ENCODE measurements at regions of chr4 and their contacts with region 1.

Region 1: GRCh38 chr4:36244257-36245079 is at the start of gene ARAP2:
- DNase-seq: peak; percentile 78
- ATAC-seq: peak; percentile 83
- H3K4me3 Mint-ChIP-seq: peak within 1 kb of the TSS; percentile 90
- H3K27ac Mint-ChIP-seq: peak within 1 kb of the TSS; percentile 91
- H3K4me1 Mint-ChIP-seq: peaks cover 52% of the 10 kb centered on the region
- H3K27me3 Mint-ChIP-seq: no peaks in the 10 kb centered on the region
- CTCF ChIP-seq: no peak
- total RNA-seq, gene ARAP2: 55.7 and 59.1 TPM in 2 replicates

Region 2: DNA sequence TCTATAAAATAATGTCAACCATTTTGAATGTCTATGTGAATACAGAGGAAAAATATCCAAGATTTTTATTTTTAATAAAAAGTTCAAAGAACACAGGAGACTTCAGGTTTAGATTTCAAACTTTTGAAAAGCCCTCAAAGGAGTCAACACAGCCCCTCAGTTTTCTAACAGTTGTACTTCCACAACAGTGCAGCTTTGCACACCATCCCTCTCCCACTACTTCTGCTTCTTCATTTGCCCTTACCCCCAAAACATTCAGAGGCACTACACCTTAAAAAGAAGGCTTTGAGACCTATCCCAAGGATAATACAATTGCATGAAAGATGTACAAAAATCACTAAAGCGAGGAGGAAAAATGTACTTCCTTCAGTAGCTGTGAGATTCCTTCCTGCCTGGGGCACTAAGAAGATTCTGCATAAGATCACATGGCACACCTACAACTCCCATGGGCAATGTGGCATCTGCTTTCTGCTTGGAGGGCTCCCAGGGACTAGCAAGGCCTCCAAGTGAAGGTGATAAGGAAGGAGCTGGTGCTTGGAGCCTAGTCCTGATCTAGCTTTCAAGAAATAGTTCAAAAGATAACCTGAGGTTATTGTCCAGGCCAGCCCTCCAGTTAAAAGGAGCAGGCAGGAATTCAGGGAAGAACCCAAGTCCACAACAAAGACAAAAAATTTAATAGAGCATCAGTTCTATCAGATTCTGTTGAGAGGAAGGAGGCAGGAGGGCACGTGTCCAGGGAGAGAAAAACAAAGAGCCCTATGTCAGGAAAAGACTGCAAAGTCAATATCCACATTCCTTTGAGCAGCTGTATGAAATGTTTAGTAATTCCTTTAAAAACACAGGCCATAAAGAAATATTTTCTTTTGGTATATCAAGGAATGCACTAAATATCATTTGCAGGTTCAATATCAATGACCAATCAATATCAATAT is 19.2 kb before region 1 on chr4:
- CTCF ChIA-PET with region 1: interaction called, 3 read pairs
- POLR2A ChIA-PET with region 1: interaction called, 8 read pairs
- intact Hi-C with region 1: loop called (anchors 1 kb)
- DNase-seq: peak; percentile 16
- ATAC-seq: peak; percentile 78
- H3K4me3 Mint-ChIP-seq: peak overlapping the region; percentile 11
- H3K27ac Mint-ChIP-seq: peak overlapping the region; percentile 72
- H3K4me1 Mint-ChIP-seq: peaks cover 61% of the 10 kb centered on the region
- H3K27me3 Mint-ChIP-seq: no peaks in the 10 kb centered on the region
- CTCF ChIP-seq: no peak

Region 3: GRCh38 chr4:36285784-36286480 is 41.5 kb after region 1 on chr4:
- CTCF ChIA-PET with region 1: interaction called, 8 read pairs
- POLR2A ChIA-PET with region 1: interaction called, 6 read pairs
- intact Hi-C with region 1: loop called (anchors 1 kb)
- DNase-seq: no peak
- ATAC-seq: peak; percentile 95
- H3K4me3 Mint-ChIP-seq: no peak overlapping the region
- H3K27ac Mint-ChIP-seq: peak overlapping the region; percentile 81
- H3K4me1 Mint-ChIP-seq: peaks cover 21% of the 10 kb centered on the region
- H3K27me3 Mint-ChIP-seq: no peaks in the 10 kb centered on the region
- CTCF ChIP-seq: no peak

Region 4: GRCh38 chr4:36325499-36325898 is 81.0 kb after region 1 on chr4:
- CTCF ChIA-PET with region 1: interaction called, 8 read pairs
- POLR2A ChIA-PET with region 1: interaction called, 13 read pairs
- intact Hi-C with region 1: loop called (anchors 2 kb)
- DNase-seq: no peak
- ATAC-seq: peak; percentile 94
- H3K4me3 Mint-ChIP-seq: peak overlapping the region; percentile 64
- H3K27ac Mint-ChIP-seq: peak overlapping the region; percentile 90
- H3K4me1 Mint-ChIP-seq: peaks cover 75% of the 10 kb centered on the region
- H3K27me3 Mint-ChIP-seq: no peaks in the 10 kb centered on the region
- CTCF ChIP-seq: no peak

Region 5: DNA sequence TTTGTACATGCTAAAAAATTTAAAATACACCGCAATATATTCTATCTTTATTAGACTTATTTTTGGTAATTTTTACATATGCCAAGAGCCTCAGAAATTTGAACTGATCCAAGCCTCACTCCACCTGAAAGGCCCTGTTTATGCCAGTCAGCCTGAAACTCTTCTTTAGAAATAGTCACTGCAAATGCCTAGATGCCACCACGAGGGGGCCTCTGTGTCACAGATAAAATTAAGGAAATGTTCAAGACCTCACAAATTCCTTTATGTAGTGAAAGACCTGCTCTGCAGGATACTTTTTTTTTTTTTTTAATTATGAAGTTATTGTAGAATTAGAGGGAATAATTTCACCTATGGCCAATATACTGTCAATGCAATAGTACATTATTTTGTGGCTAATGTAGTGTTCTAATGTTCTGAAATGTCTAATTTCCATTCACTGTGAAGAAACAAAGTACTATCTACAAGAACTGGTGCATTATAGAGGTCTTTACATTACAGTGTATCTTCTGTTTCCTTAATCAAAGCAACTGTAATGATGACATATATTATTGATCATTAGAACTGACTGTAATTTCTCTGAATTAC is 106.7 kb after region 1 on chr4:
- CTCF ChIA-PET with region 1: interaction called, 10 read pairs
- POLR2A ChIA-PET with region 1: interaction called, 14 read pairs
- intact Hi-C with region 1: loop called (anchors 1 kb)
- DNase-seq: peak; percentile 29
- ATAC-seq: peak; percentile 49
- H3K4me3 Mint-ChIP-seq: no peak overlapping the region
- H3K27ac Mint-ChIP-seq: no peak overlapping the region
- H3K4me1 Mint-ChIP-seq: peaks cover 22% of the 10 kb centered on the region
- H3K27me3 Mint-ChIP-seq: no peaks in the 10 kb centered on the region
- CTCF ChIP-seq: peak; percentile 91

Measured in activated B cell treated with CpG ODN at 0.5 μM for 24 hours (primary cell).